Mammary epithelial cell (primary cell): ENCODE measurements at regions of chr10 and their contacts with region 1.

Region 1: DNA sequence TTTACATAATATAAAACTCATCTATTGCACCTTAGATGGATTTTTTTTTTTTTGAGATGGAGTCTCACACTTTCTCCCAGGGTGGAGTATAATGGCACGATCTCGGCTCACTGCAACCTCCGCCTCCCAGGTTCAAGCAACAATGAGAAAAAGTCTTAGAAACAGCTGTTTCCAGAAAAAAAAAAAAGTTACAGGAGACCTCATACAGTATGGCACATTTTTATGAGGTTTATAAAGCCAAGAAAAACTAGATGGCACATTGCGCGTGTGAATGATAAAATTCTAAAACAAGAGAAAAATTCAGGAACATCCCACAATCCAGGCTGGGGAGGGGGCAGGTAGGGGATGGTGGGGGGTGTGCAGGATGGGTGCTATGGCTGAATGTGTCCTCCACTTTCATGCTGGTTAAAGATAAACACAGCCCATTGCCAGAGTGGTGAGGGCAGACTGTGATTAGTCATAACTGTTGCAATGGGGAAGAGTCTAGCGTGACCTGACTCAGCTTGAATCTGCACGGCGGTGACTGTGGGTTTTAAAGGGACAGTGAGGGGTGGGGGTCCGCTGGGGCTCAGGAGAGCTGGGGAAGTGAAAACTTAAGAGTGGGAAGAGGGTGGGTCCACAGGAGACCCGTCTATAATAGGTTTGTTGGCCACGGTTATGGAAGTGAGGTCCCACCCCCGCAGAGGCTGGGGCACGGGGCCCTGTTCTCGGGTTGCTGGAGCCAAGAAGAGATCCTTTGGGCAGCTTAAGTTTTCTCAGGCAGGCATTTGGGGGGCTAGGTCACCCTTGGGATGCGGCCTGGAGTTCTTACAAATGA is 11.9 kb upstream of the LRRC27 start:
- DNase-seq: peak; percentile 74
- H3K4me3 ChIP-seq: no peak overlapping the region
- H3K27ac ChIP-seq: no peak overlapping the region
- H3K4me1 ChIP-seq: peaks cover 12% of the 10 kb centered on the region
- H3K27me3 ChIP-seq: no peaks in the 10 kb centered on the region
- CTCF ChIP-seq: no peak

Region 2: GRCh38 chr10:132223156-132223590 is 96.9 kb before region 1 on chr10:
- CTCF ChIA-PET with region 1: no interaction called
- dilution Hi-C with region 1: no loop called
- in situ Hi-C with region 1: no loop called
- intact Hi-C with region 1: no loop called
- DNase-seq: peak; percentile 55
- H3K4me3 ChIP-seq: no peak overlapping the region
- H3K27ac ChIP-seq: no peak overlapping the region
- H3K4me1 ChIP-seq: no peaks in the 10 kb centered on the region
- H3K27me3 ChIP-seq: no peaks in the 10 kb centered on the region
- CTCF ChIP-seq: peak; percentile 97 to 99

Region 3: DNA sequence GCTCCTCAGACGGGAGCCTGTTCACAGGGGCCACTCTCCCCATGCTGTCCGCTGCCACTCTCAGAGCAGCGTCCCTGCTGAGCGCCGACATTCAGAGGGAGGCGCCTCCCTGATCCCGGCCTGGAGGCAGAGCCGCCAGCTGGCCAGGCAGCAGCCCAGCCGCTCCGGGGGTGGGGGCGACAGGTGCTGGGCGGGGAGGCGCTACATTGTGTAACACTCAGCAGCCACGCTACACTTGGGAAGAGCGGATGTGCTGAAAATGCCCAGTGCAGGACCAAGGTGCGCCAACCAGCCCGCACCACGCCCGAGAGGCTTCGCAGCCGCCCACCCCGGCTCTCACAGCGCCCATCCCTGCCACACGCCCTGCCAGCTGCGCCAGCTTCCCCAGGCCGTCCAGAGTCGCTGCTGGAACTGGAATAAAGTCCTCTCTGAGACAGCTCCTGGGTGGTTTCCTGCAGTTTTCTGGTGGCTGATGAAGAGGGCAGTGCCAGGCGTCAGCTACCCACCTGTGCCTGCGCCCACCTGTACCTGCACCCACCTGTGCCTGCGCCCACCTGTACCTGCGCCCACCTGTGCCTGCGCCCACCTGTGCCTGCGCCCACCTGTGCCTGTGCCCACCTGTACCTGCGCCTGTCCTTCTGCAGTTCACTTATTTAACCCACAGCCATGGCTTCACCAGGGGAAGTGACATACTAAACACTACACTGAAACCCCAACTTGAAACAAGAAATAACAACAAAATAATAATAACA is 38.0 kb before region 1 on chr10:
- CTCF ChIA-PET with region 1: no interaction called
- dilution Hi-C with region 1: no loop called
- in situ Hi-C with region 1: no loop called
- intact Hi-C with region 1: no loop called
- DNase-seq: no peak
- H3K4me3 ChIP-seq: no peak overlapping the region
- H3K27ac ChIP-seq: no peak overlapping the region
- H3K4me1 ChIP-seq: no peaks in the 10 kb centered on the region
- H3K27me3 ChIP-seq: peaks cover 6% of the 10 kb centered on the region
- CTCF ChIP-seq: no peak

Region 4: DNA sequence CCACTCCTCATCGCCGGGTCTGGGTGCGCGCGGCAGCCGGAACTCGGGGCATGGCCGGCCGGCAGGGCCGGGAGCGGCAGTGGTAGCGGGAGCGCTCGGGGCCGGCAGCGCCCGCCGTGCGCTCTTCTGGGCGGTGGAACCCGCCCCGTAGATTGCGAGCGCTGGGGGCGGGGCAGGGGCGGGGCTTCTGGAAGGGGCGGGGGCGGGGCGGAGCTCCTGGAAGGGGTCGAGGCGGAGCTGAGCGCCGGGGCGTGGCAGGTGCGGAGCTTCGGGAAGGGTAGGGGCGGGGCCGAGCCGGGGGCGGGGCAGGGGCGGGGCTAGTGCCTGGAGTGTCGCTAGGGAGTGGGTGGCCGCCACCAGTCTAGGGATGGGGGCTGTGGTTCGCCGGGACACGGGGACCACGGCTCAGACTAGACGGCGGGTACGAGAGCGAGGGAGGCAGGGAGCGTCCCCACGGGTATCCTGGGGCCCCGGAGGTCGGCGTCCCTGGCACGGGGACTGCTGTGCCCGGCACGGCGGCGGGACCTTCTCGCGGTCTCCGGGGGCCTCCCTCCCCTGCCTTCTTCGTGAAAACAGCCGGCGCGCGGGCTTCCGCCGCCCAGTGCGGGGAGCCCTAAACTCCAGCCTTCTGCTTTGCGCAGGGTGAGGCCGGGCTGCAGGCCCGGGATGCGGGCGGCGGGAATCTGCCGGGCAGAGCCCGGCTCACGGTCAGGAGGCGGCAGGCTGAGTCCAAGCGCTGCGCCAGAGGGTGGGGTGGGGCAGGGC is 12.1 kb before region 1 on chr10 and contains the start of gene STK32C:
- CTCF ChIA-PET with region 1: no interaction called
- dilution Hi-C with region 1: no loop called
- in situ Hi-C with region 1: no loop called
- intact Hi-C with region 1: loop called (anchors 1 kb)
- DNase-seq: peak; percentile 69
- H3K4me3 ChIP-seq: peak within 1 kb of the TSS; percentile 59 to 83 (median 71)
- H3K27ac ChIP-seq: no peak within 1 kb of the TSS
- H3K4me1 ChIP-seq: peaks cover 14% of the 10 kb centered on the region
- H3K27me3 ChIP-seq: no peaks in the 10 kb centered on the region
- CTCF ChIP-seq: no peak
- total RNA-seq, gene STK32C: 2.5 to 9.2 TPM

Region 5: GRCh38 chr10:132331526-132332432 is 11.7 kb after region 1 on chr10 and contains the start of gene LRRC27:
- CTCF ChIA-PET with region 1: no interaction called
- dilution Hi-C with region 1: no loop called
- in situ Hi-C with region 1: no loop called
- intact Hi-C with region 1: loop called (anchors 1 kb)
- DNase-seq: peak; percentile 96
- H3K4me3 ChIP-seq: peak within 1 kb of the TSS; percentile 90 to 99 (median 94)
- H3K27ac ChIP-seq: peak within 1 kb of the TSS; percentile 40
- H3K4me1 ChIP-seq: peaks cover 15% of the 10 kb centered on the region
- H3K27me3 ChIP-seq: no peaks in the 10 kb centered on the region
- CTCF ChIP-seq: no peak
- total RNA-seq, gene LRRC27: 6.1 to 6.8 TPM